Colonic mucosa (tissue), 4 donors: ENCODE measurements at regions of chr1 and their contacts with region 1.

Region 1: GRCh38 chr1:162391790-162392563 is 10.4 kb downstream of the C1orf226 start:
- DNase-seq: no peak
- H3K4me3 ChIP-seq: no peak overlapping the region
- H3K27ac ChIP-seq: no peak overlapping the region
- H3K4me1 ChIP-seq: no peaks in the 10 kb centered on the region
- H3K27me3 ChIP-seq: no peaks in the 10 kb centered on the region
- CTCF ChIP-seq: peak; percentile 69

Region 2: DNA sequence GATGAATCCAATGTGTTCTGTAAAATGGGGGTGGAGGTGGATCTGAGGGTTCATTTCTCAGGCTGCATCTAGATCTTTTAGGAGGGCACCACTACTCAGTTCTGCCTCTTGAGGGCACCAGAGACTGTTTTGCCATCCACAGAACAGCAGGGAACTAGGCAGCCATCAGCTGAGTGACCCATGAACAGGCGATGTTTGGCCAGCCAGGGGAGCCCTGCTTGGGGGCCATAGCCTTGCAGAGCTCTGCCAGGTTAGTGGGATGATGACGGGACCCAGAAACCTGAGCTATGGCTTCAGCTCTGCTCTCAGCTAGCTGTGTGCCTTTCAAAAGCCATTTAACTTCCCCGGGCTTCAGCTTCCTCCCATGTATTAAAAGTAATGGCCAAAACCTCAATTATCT is 335.9 kb before region 1 on chr1:
- intact Hi-C with region 1: loop called (anchors 5 kb)
- DNase-seq: peak; percentile 69
- H3K4me3 ChIP-seq: no peak overlapping the region
- H3K27ac ChIP-seq: no peak overlapping the region
- H3K4me1 ChIP-seq: no peaks in the 10 kb centered on the region
- H3K27me3 ChIP-seq: no peaks in the 10 kb centered on the region
- CTCF ChIP-seq: peak; percentile 75

Region 3: GRCh38 chr1:162187687-162188276 is 204.2 kb before region 1 on chr1:
- intact Hi-C with region 1: no loop called
- DNase-seq: no peak
- H3K4me3 ChIP-seq: no peak overlapping the region
- H3K27ac ChIP-seq: no peak overlapping the region
- H3K4me1 ChIP-seq: no peaks in the 10 kb centered on the region
- H3K27me3 ChIP-seq: no peaks in the 10 kb centered on the region
- CTCF ChIP-seq: no peak

Region 4: DNA sequence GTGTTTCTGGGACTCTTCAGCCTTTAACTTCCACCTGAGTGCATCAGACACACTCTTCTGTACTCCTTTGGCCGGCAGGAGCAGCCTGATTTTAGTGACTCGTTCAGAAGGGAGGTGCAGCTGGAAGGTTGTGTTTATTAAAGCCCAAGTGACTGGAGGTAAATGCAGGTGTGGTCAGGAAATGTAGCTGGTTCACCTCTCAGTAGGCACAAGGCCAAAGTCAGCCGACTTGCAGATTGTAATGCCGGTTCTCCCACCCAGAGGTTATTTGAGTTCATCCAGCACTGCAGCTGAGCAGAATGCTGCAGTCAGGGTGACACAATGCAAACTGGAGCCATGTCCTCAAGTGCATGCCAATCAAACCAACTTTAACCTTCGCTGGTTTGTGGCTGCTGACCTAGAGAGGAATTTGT is 106.8 kb before region 1 on chr1:
- intact Hi-C with region 1: loop called (anchors 10 kb)
- DNase-seq: peak; percentile 92
- H3K4me3 ChIP-seq: no peak overlapping the region
- H3K27ac ChIP-seq: peak overlapping the region; percentile 8
- H3K4me1 ChIP-seq: no peaks in the 10 kb centered on the region
- H3K27me3 ChIP-seq: no peaks in the 10 kb centered on the region
- CTCF ChIP-seq: no peak

Region 5: GRCh38 chr1:162349635-162350330 is 42.2 kb before region 1 on chr1:
- intact Hi-C with region 1: loop called (anchors 5 kb)
- DNase-seq: peak; percentile 54
- H3K4me3 ChIP-seq: no peak overlapping the region
- H3K27ac ChIP-seq: peak overlapping the region; percentile 34
- H3K4me1 ChIP-seq: no peaks in the 10 kb centered on the region
- H3K27me3 ChIP-seq: no peaks in the 10 kb centered on the region
- CTCF ChIP-seq: no peak